ENCODE measurements at regions of chr6 and their contacts with region 1.

Region 1: DNA sequence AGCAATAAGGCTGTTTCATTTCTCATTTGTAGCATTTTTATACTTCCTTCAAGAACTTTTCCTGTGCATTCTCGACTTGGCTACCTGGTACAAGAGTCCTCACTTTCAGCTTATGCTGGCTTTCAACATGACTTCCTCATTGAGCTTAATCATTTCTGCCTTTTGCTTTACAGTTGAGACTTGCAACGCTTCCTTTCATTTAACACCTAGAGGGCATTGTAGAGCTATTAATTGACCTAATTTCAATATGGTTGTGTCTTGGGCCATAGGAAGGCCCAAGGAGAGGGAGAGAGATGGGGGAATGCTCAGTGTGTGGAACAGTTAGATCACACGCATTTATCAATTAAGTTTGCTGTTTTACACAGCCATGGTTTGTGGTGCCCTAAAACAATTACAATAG is 37.2 kb downstream of the SLC22A2 start:
- DNase-seq: no peak
- ATAC-seq: no peak
- H3K4me3 ChIP-seq: no peak overlapping the region
- H3K27ac ChIP-seq: peak overlapping the region in 1 of 2 donors; percentile 34
- H3K4me1 ChIP-seq: peaks cover 5 to 7% of the 10 kb centered on the region in 2 donors
- H3K27me3 ChIP-seq: no peaks in the 10 kb centered on the region

Region 2: GRCh38 chr6:160146454-160147145 is 74.8 kb before region 1 on chr6:
- intact Hi-C with region 1: loop called in 1 of 2 experiments (anchors 5 kb)
- DNase-seq: no peak
- ATAC-seq: peak; percentile 72
- H3K4me3 ChIP-seq: no peak overlapping the region
- H3K27ac ChIP-seq: peak overlapping the region; percentile 74 to 87
- H3K4me1 ChIP-seq: peaks cover 5 to 14% of the 10 kb centered on the region in 2 donors
- H3K27me3 ChIP-seq: no peaks in the 10 kb centered on the region

Region 3: GRCh38 chr6:160355001-160355400 is 133.6 kb after region 1 on chr6:
- intact Hi-C with region 1: loop called in 1 of 2 experiments (anchors 10 kb)
- DNase-seq: no peak
- ATAC-seq: peak; percentile 42
- H3K4me3 ChIP-seq: no peak overlapping the region
- H3K27ac ChIP-seq: peak overlapping the region; percentile 10 to 86
- H3K4me1 ChIP-seq: peaks cover 7 to 19% of the 10 kb centered on the region in 2 donors
- H3K27me3 ChIP-seq: no peaks in the 10 kb centered on the region

Region 4: GRCh38 chr6:160428069-160428430 is 206.6 kb after region 1 on chr6:
- intact Hi-C with region 1: loop called in 1 of 2 experiments (anchors 10 kb)
- DNase-seq: peak in 1 of 2 donors; percentile 63
- ATAC-seq: no peak
- H3K4me3 ChIP-seq: no peak overlapping the region
- H3K27ac ChIP-seq: peak overlapping the region in 1 of 2 donors; percentile 67
- H3K4me1 ChIP-seq: peaks cover 4 to 8% of the 10 kb centered on the region in 2 donors
- H3K27me3 ChIP-seq: no peaks in the 10 kb centered on the region

Measured in aorta (tissue), 5 donors.